HCT116 (cell line): ENCODE measurements at regions of chr15 and their contacts with region 1.

Region 1: GRCh38 chr15:76931397-76932007 is at the start of gene RCN2:
- DNase-seq: peak; percentile 81
- ATAC-seq: peak; percentile 99
- H3K4me3 ChIP-seq: peak within 1 kb of the TSS; percentile 81 to 83
- H3K27ac ChIP-seq: peak within 1 kb of the TSS; percentile 65
- H3K4me1 ChIP-seq: peaks cover 5 to 7% of the 10 kb centered on the region in 2 experiments; a peak in 2 of 4 replicates
- H3K27me3 ChIP-seq: no peaks in the 10 kb centered on the region
- CTCF ChIP-seq: no peak
- POLR2A ChIP-seq: peak; percentile 68
- RAD21 ChIP-seq: no peak
- total RNA-seq, gene RCN2: 71.5 TPM

Region 2: GRCh38 chr15:76945494-76946093 is 14.1 kb after region 1 on chr15:
- CTCF ChIA-PET with region 1: no interaction called
- POLR2A ChIA-PET with region 1: interaction called, 10 read pairs
- RAD21 ChIA-PET with region 1: no interaction called
- intact Hi-C with region 1: no loop called
- DNase-seq: no peak
- ATAC-seq: no peak
- H3K4me3 ChIP-seq: no peak overlapping the region
- H3K27ac ChIP-seq: no peak overlapping the region
- H3K4me1 ChIP-seq: no peaks in the 10 kb centered on the region
- H3K27me3 ChIP-seq: no peaks in the 10 kb centered on the region
- CTCF ChIP-seq: no peak
- POLR2A ChIP-seq: no peak
- RAD21 ChIP-seq: no peak